ENCODE measurements at regions of chr20 and their contacts with region 1.

Region 1: DNA sequence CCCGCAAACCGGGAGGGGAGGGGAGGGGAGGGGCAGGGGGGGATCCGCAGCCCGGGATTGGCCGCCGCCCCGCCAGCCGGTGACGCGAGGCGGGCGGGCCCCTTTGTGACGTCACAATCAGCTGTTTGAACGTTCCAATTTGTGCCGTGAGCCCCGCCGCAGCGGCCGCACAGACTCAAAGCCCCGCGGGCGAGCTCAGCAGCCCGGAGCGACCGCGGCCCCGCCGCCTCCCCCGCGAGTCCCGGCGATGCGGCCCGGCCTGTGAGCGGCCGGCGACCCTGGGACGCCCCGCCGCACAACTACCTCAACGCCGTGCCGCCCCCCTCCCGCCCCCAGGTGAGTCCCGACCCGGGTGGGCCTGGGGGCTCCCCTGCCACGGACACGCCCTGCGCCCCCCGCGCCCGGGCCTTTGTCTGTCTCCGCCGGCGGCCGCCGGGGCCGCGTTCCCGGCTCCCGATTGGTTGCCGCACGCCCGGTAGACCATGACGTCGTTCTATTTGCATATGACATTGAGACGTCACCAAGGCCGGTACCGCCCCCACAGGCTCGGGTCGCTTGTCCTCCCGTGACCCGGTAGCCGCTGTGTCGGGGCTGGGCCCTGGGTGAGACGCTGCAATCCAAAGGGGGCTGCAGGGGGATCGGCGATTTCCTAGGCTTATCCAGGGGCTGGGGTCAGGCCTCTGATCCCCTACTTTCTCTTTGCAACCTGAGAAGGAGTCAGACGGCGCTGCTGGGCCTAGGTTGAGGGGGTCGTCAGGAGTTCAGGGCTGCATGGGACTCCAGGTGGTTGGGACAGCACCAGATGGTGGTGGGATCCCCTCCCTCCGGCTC is at the start of gene TP53INP2:
- DNase-seq: peak; percentile 88
- H3K4me3 ChIP-seq: peak within 1 kb of the TSS; percentile 93
- H3K27ac ChIP-seq: peak within 1 kb of the TSS; percentile 54
- H3K4me1 ChIP-seq: peaks cover 19% of the 10 kb centered on the region
- CTCF ChIP-seq: no peak
- total RNA-seq, gene TP53INP2: 0.73 and 0.82 TPM in 2 replicates

Region 2: GRCh38 chr20:34302723-34303528 is 401.5 kb before region 1 on chr20 and contains the start of gene AHCY:
- CTCF ChIA-PET with region 1: no interaction called
- POLR2A ChIA-PET with region 1: no interaction called
- intact Hi-C with region 1: loop called (anchors 2 kb)
- DNase-seq: peak; percentile 96
- H3K4me3 ChIP-seq: peak within 1 kb of the TSS; percentile 81
- H3K27ac ChIP-seq: peak within 1 kb of the TSS; percentile 58
- H3K4me1 ChIP-seq: peaks cover 41% of the 10 kb centered on the region
- CTCF ChIP-seq: no peak; the same call in 1 of the 2 replicates
- total RNA-seq, gene AHCY: 121 and 133 TPM in 2 replicates

Region 3: DNA sequence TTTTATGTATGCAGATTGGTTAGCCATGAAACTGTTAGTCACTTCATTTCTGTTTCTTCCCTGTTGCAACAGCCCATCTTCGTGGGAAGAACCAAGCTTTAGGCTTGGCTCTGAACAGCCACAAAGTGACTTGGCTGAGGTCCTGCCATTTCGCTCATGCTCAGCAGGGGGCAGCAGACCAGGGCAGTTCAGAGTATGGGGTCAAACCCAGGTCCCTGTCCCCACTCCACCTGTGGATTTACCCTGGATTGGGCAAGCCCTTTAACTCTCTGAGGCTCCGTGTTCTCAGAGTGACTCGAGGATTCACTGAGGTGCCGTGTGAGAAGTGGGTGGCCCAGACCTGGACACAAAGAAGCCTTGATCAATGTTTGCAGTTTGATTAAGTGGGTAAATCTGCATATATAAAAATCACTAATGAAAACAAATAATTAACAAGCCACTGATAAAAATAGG is 165.7 kb before region 1 on chr20:
- CTCF ChIA-PET with region 1: interaction called, 8 read pairs
- POLR2A ChIA-PET with region 1: interaction called, 4 read pairs
- intact Hi-C with region 1: loop called (anchors 1 kb)
- DNase-seq: peak; percentile 64
- H3K4me3 ChIP-seq: no peak overlapping the region
- H3K27ac ChIP-seq: no peak overlapping the region
- H3K4me1 ChIP-seq: no peaks in the 10 kb centered on the region
- CTCF ChIP-seq: peak; percentile 94

Measured in OCI-LY7 (cell line).